ENCODE measurements at regions of chr13 and their contacts with region 1.

Region 1: DNA sequence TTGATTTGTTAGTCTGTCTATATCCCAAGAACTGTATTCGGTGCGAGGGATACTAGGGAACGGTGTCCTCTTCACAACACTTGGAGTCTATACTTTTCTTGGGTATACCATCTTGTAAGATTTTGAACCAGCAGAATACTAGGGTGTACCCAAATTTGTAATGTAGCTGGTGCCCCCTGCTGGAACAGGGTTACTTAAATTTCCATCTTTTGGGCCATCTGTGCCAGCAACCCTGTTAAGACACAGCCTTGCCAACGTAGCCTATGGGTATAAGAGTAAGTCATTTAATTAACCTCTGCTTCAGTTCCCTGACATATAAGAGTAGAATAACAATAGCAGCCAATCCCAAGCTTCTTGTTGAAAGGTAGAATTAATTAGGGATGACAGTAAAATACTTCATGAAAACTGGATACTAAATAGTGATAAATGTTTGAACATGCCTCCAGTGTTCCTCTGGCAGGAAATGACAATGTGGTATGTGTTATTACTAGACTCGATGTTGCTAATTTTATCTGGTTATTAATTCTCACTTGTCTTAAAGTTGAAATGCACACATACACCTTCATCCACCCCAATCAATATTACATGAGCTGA is 607.6 kb downstream of the FGF9 start:
- DNase-seq: peak in 2 of 4 donors; percentile 35 to 48
- ATAC-seq: peak; percentile 73
- H3K4me3 ChIP-seq: no peak overlapping the region
- H3K27ac ChIP-seq: no peak overlapping the region
- H3K4me1 ChIP-seq: no peaks in the 10 kb centered on the region
- H3K27me3 ChIP-seq: no peaks in the 10 kb centered on the region
- CTCF ChIP-seq: peak; percentile 18 to 22

Region 2: GRCh38 chr13:21638319-21639282 is 639.8 kb before region 1 on chr13:
- intact Hi-C with region 1: loop called in 1 of 2 experiments (anchors 5 kb)
- DNase-seq: peak in 3 of 4 donors; percentile 21 to 58 (median 57)
- ATAC-seq: peak; percentile 76
- H3K4me3 ChIP-seq: no peak overlapping the region
- H3K27ac ChIP-seq: no peak overlapping the region
- H3K4me1 ChIP-seq: peaks cover 0 to 4% of the 10 kb centered on the region in 2 donors
- H3K27me3 ChIP-seq: no peaks in the 10 kb centered on the region
- CTCF ChIP-seq: peak; percentile 71 to 82